Activated CD4-positive, alpha-beta memory T cell treated with anti-CD3 and anti-CD28 coated beads for 36 hours (primary cell): ENCODE measurements at regions of chr9 and their contacts with region 1.

Region 1: DNA sequence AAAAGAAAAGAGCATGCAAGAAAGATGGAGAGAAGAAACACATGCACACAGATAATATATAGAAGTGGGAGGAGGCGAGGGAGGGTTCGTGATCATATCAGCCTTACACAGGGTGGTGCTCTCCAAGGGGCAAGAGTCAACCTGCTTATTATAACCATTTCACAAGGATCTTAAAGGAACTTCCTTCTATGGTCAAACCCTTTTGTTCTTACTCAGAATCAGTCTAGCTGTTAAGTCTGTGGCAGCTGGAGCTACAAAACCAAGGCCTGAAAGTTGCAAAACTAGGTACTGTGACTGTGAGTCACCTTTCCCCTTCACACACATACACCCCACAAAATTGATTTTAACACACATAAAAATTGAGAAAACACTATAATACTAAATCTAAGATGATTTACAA is 18.5 kb upstream of the ERMP1 start:
- DNase-seq: peak; percentile 66
- H3K4me3 Mint-ChIP-seq: no peak overlapping the region
- H3K27ac Mint-ChIP-seq: peak overlapping the region; percentile 70
- H3K4me1 Mint-ChIP-seq: peaks cover 46% of the 10 kb centered on the region
- H3K27me3 Mint-ChIP-seq: no peaks in the 10 kb centered on the region

Region 2: DNA sequence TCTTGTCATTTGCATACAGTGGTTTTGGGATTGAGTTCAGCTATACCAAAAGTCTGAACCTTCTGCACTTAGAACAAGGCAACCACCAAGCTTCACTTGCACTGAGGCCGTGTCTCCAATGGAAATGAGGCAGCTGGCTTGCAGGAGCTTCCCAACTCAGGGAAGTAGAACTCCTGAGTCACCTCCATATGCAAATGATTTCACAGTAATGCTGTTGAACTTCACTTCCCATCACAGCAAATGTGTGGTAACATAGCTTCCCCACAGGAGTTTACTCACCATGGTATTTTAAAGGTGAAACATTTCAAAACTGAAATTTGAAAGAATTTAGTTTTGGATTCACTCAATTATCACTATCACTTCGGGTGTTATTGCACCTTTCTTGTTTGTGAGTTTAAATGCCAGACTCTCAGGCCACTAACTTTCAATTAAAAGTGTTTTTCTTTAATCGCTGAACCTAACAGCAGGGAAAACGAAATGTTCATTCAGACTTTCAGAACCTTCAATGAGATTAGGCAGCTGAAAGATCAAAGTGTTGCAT is 392.1 kb before region 1 on chr9:
- CTCF ChIA-PET with region 1: no interaction called
- POLR2A ChIA-PET with region 1: no interaction called
- intact Hi-C with region 1: loop called (anchors 1 kb)
- DNase-seq: peak; percentile 57
- H3K4me3 Mint-ChIP-seq: peak overlapping the region; percentile 68
- H3K27ac Mint-ChIP-seq: peak overlapping the region; percentile 87
- H3K4me1 Mint-ChIP-seq: peaks cover 73% of the 10 kb centered on the region
- H3K27me3 Mint-ChIP-seq: no peaks in the 10 kb centered on the region

Region 3: GRCh38 chr9:5644501-5644900 is 206.9 kb before region 1 on chr9:
- CTCF ChIA-PET with region 1: no interaction called
- POLR2A ChIA-PET with region 1: no interaction called
- intact Hi-C with region 1: loop called (anchors 5 kb)
- DNase-seq: no peak
- H3K4me3 Mint-ChIP-seq: no peak overlapping the region
- H3K27ac Mint-ChIP-seq: peak overlapping the region; percentile 10
- H3K4me1 Mint-ChIP-seq: peaks cover 36% of the 10 kb centered on the region
- H3K27me3 Mint-ChIP-seq: no peaks in the 10 kb centered on the region

Region 4: DNA sequence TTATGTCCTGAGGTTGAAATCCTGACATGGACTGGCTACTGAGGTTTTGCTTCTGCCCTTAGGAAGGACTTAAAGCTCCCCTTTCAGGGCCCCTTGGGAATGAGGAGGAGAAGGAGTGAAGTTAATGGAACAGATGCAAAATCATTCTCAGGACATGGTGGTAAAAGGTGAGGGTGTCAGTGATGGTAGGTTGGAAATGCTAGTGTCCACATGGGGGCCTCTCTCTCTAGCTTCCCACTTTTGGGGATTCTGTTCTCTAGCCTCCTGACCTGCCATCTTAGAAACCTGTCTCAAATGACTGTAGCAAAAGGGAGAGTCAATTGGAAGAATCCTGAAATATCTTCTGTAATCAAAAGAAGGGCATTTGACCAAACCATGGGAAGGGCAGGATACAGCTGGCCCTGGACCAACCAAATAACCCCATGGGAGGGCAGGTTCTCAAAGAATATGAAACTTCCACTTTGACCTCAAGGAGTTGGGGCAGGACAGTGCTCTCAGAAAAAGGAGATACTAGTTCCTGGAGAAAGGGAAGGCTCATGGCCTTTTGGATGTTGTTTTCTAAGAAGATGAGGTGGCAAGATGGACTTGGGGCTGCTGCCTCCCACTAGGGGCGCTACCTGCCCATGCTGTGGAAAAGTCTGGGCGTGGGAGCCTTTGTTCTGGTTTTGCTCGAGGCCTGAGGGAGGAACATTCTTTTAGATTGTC is 18.0 kb after region 1 on chr9:
- CTCF ChIA-PET with region 1: interaction called, 7 read pairs
- POLR2A ChIA-PET with region 1: no interaction called
- intact Hi-C with region 1: loop called (anchors 2 kb)
- DNase-seq: peak; percentile 62
- H3K4me3 Mint-ChIP-seq: no peak overlapping the region
- H3K27ac Mint-ChIP-seq: no peak overlapping the region
- H3K4me1 Mint-ChIP-seq: peaks cover 9% of the 10 kb centered on the region
- H3K27me3 Mint-ChIP-seq: no peaks in the 10 kb centered on the region

Region 5: DNA sequence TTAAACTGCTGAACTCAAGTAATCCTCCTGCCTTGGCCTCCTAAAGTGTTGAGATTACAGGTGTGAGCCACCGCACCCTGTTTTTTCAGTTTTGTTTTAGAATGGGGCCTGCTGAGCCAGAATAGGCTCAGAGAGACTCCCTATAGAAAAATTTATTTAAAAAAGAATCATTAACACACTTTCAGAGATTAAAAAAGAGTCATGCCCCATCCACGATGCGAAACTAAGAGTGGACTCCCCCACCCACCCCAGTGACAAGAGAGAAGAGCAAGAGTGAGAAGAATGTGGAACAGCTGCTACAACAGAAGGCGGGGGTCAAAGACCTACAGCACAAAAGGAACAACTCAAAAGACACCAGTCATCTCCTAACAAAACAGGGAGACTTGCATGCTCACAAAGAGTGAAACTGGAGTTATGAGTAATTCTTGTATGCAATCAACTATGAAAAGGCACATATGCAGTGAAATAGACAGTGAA is 746.8 kb after region 1 on chr9:
- CTCF ChIA-PET with region 1: no interaction called
- POLR2A ChIA-PET with region 1: no interaction called
- intact Hi-C with region 1: loop called (anchors 5 kb)
- DNase-seq: peak; percentile 74
- H3K4me3 Mint-ChIP-seq: peak overlapping the region; percentile 47
- H3K27ac Mint-ChIP-seq: peak overlapping the region; percentile 87
- H3K4me1 Mint-ChIP-seq: peaks cover 8% of the 10 kb centered on the region
- H3K27me3 Mint-ChIP-seq: peaks cover 1% of the 10 kb centered on the region